ENCODE measurements at regions of chr1 and their contacts with region 1.

Region 1: GRCh38 chr1:109426278-109427170 is at the start of gene PSMA5:
- DNase-seq: peak; percentile 93 to 99 (median 96)
- H3K4me3 ChIP-seq: peak within 1 kb of the TSS; percentile 96 to 98
- H3K4me3 Mint-ChIP-seq: peak within 1 kb of the TSS; percentile 94 to 99 (median 98)
- H3K27ac ChIP-seq: peak within 1 kb of the TSS; percentile 87
- H3K27ac Mint-ChIP-seq: peak within 1 kb of the TSS; percentile 90 to 99 (median 98)
- H3K4me1 ChIP-seq: peaks cover 44% of the 10 kb centered on the region
- H3K4me1 Mint-ChIP-seq: peaks cover 22 to 50% (median 37%) of the 10 kb centered on the region in 4 donors
- H3K27me3 ChIP-seq: no peaks in the 10 kb centered on the region
- H3K27me3 Mint-ChIP-seq: no peaks in the 10 kb centered on the region
- total RNA-seq, gene PSMA5: 87.7 to 90.2 TPM

Region 2: GRCh38 chr1:108746372-108747205 is 679.9 kb before region 1 on chr1 and contains the start of gene STXBP3:
- CTCF ChIA-PET with region 1: no interaction called
- POLR2A ChIA-PET with region 1: no interaction called
- intact Hi-C with region 1: loop called (anchors 5 kb)
- DNase-seq: peak; percentile 98 to 99 (median 99)
- H3K4me3 ChIP-seq: peak within 1 kb of the TSS; percentile 57 to 85
- H3K4me3 Mint-ChIP-seq: peak within 1 kb of the TSS; percentile 94 to 100 (median 99)
- H3K27ac ChIP-seq: peak within 1 kb of the TSS; percentile 95
- H3K27ac Mint-ChIP-seq: peak within 1 kb of the TSS; percentile 94 to 100 (median 99)
- H3K4me1 ChIP-seq: peaks cover 41% of the 10 kb centered on the region
- H3K4me1 Mint-ChIP-seq: peaks cover 25 to 47% (median 34%) of the 10 kb centered on the region in 4 donors
- H3K27me3 ChIP-seq: no peaks in the 10 kb centered on the region
- H3K27me3 Mint-ChIP-seq: no peaks in the 10 kb centered on the region
- total RNA-seq, gene STXBP3: 90.9 to 92.5 TPM

Region 3: GRCh38 chr1:109282952-109283747 is 143.4 kb before region 1 on chr1 and contains the start of gene PSRC1:
- CTCF ChIA-PET with region 1: no interaction called
- POLR2A ChIA-PET with region 1: interaction called, 4 read pairs
- intact Hi-C with region 1: loop called (anchors 1 kb)
- DNase-seq: peak; percentile 87 to 91 (median 88)
- H3K4me3 ChIP-seq: peak within 1 kb of the TSS; percentile 74 to 91
- H3K4me3 Mint-ChIP-seq: peak within 1 kb of the TSS; percentile 91 to 100 (median 96)
- H3K27ac ChIP-seq: peak within 1 kb of the TSS; percentile 59
- H3K27ac Mint-ChIP-seq: peak within 1 kb of the TSS; percentile 82 to 93 (median 92)
- H3K4me1 ChIP-seq: peaks cover 23% of the 10 kb centered on the region
- H3K4me1 Mint-ChIP-seq: peaks cover 8 to 30% (median 16%) of the 10 kb centered on the region in 4 donors
- H3K27me3 ChIP-seq: no peaks in the 10 kb centered on the region
- H3K27me3 Mint-ChIP-seq: no peaks in the 10 kb centered on the region
- total RNA-seq, gene PSRC1: 0.17 to 0.28 TPM

Region 4: GRCh38 chr1:109483672-109484518 is 57.4 kb after region 1 on chr1 and contains the start of gene ATXN7L2:
- CTCF ChIA-PET with region 1: interaction called, 7 read pairs
- POLR2A ChIA-PET with region 1: interaction called, 59 read pairs
- intact Hi-C with region 1: loop called (anchors 1 kb)
- DNase-seq: peak; percentile 92 to 95 (median 93)
- H3K4me3 ChIP-seq: peak within 1 kb of the TSS; percentile 95 to 98
- H3K4me3 Mint-ChIP-seq: peak within 1 kb of the TSS; percentile 91 to 96 (median 94)
- H3K27ac ChIP-seq: peak within 1 kb of the TSS; percentile 76
- H3K27ac Mint-ChIP-seq: peak within 1 kb of the TSS; percentile 86 to 97 (median 92)
- H3K4me1 ChIP-seq: peaks cover 20% of the 10 kb centered on the region
- H3K4me1 Mint-ChIP-seq: peaks cover 17 to 42% (median 30%) of the 10 kb centered on the region in 4 donors
- H3K27me3 ChIP-seq: peaks cover 4% of the 10 kb centered on the region
- H3K27me3 Mint-ChIP-seq: peaks cover 0 to 5% of the 10 kb centered on the region in 2 donors
- total RNA-seq, gene ATXN7L2: 7.4 to 9.0 TPM

Region 5: GRCh38 chr1:109499661-109500536 is 73.4 kb after region 1 on chr1:
- CTCF ChIA-PET with region 1: no interaction called
- POLR2A ChIA-PET with region 1: interaction called, 12 read pairs
- intact Hi-C with region 1: no loop called
- DNase-seq: peak; percentile 58 to 69 (median 61)
- H3K4me3 ChIP-seq: no peak overlapping the region
- H3K4me3 Mint-ChIP-seq: peak overlapping the region; percentile 52 to 75 (median 62)
- H3K27ac ChIP-seq: peak overlapping the region; percentile 86
- H3K27ac Mint-ChIP-seq: peak overlapping the region; percentile 70 to 97 (median 92)
- H3K4me1 ChIP-seq: peaks cover 98% of the 10 kb centered on the region
- H3K4me1 Mint-ChIP-seq: peaks cover 68 to 97% (median 86%) of the 10 kb centered on the region in 4 donors
- H3K27me3 ChIP-seq: no peaks in the 10 kb centered on the region
- H3K27me3 Mint-ChIP-seq: no peaks in the 10 kb centered on the region

Region 6: DNA sequence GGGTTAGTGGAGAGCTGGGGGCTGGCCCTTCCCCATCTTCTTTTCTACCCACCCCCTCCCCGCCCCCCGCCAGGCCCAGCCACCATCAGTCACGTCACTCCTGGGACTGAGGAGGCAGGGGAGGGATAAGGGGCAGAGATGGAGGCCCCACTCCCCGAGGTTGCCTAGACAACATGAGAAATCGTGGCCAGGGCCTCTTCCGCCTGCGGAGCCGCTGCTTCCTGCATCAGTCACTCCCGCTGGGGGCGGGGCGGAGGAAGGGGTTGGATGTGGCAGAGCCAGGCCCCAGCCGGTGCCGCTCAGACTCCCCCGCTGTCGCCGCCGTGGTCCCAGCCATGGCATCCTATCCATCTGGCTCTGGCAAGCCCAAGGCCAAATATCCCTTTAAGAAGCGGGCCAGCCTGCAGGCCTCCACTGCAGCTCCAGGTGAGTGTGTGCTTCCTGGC is 194.3 kb after region 1 on chr1:
- CTCF ChIA-PET with region 1: no interaction called
- POLR2A ChIA-PET with region 1: no interaction called
- intact Hi-C with region 1: loop called (anchors 2 kb)
- DNase-seq: peak; percentile 96 to 99 (median 97)
- H3K4me3 ChIP-seq: peak overlapping the region; percentile 76 to 93
- H3K4me3 Mint-ChIP-seq: peak overlapping the region; percentile 92 to 99 (median 96)
- H3K27ac ChIP-seq: peak overlapping the region; percentile 96
- H3K27ac Mint-ChIP-seq: peak overlapping the region; percentile 91 to 99 (median 99)
- H3K4me1 ChIP-seq: peaks cover 72% of the 10 kb centered on the region
- H3K4me1 Mint-ChIP-seq: peaks cover 47 to 86% (median 58%) of the 10 kb centered on the region in 4 donors
- H3K27me3 ChIP-seq: no peaks in the 10 kb centered on the region
- H3K27me3 Mint-ChIP-seq: no peaks in the 10 kb centered on the region